Activated CD8-positive, alpha-beta T cell treated with anti-CD3 and anti-CD28 coated beads for 36 hours (primary cell): ENCODE measurements at regions of chr4 and their contacts with region 1.

Region 1: DNA sequence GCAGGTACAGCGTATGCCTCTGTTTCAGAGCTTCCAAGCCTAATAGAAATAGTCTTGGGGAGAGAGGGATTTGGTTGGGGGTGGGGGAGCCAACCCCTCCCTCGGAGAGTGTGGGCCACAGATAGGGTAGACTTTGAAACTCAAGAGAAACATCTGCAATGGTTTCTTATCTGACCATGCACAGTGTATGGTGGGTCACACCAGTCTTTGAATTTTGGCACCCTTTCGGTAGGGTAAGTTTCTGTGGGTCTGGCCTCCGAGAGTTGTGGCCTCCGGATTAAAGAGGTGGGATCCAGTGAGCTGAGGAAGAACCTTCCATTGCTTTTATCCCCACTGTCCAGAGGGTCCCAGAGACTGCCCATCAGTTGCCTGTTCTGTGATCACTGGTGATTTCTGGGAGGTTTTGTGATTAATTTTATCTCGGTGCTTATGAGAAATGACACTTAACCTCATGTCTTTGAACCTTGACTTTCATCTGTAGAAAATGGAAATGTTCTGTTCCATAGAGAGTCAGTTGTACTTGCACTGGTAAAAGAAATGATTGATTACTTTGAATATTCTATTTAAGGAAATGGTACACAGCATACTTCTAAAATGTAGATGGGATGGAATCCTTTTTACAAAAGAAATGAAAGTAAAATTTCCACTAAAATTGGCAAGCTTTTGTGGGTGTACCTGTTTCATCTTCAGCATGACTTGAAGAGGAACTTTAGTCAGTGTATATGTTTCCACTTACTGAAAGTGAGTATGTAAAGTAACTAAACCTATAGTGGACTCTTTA is 62.7 kb downstream of the TMEM131L start:
- DNase-seq: no peak
- ATAC-seq: peak; percentile 73
- H3K4me3 Mint-ChIP-seq: peak overlapping the region; percentile 50
- H3K27ac Mint-ChIP-seq: peak overlapping the region; percentile 96
- H3K4me1 Mint-ChIP-seq: peaks cover 87% of the 10 kb centered on the region
- H3K27me3 Mint-ChIP-seq: no peaks in the 10 kb centered on the region
- CTCF ChIP-seq: no peak

Region 2: DNA sequence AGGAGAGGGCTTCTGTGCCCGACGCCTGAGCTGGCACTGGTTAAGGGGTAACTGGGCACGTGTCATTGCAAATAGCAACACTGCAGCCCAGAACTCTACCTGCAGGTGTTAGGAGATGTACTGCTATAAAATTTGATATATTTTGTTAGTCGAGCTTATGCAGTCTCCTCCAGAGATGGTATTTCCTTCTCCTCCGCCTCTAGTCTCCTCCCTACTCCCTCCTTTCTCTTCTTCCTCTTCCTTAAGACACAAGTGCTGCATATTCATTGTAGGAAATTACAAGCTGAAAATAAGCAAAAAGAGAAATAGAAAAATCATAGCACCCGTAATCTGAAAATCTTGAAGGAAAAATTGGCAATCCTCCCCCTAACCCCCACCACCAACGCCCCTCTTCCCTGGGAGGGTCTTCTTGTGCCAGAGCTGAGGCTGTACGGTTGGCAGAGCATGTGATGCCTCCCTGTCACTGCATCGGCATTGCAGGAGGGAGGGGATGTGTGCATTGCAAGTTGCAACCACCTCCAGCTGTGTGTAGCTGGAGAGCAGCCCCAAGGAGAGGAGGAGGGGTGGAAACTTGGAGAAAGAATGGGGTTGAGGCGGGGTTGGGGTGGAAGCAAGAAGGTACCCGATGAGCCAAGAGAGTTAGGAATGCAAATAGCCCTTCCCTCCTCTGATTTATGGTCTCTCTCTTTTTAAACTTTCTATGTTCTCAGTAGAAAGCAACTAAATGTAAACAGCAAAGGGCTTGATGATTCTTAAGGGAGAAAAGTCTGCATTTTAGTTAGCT is 232.7 kb before region 1 on chr4:
- CTCF ChIA-PET with region 1: no interaction called
- POLR2A ChIA-PET with region 1: no interaction called
- intact Hi-C with region 1: no loop called
- DNase-seq: no peak
- ATAC-seq: no peak
- H3K4me3 Mint-ChIP-seq: no peak overlapping the region
- H3K27ac Mint-ChIP-seq: no peak overlapping the region
- H3K4me1 Mint-ChIP-seq: no peaks in the 10 kb centered on the region
- H3K27me3 Mint-ChIP-seq: no peaks in the 10 kb centered on the region
- CTCF ChIP-seq: no peak

Region 3: GRCh38 chr4:153541456-153542096 is 12.7 kb after region 1 on chr4:
- CTCF ChIA-PET with region 1: interaction called, 26 read pairs
- POLR2A ChIA-PET with region 1: interaction called, 6 read pairs
- intact Hi-C with region 1: no loop called
- DNase-seq: peak; percentile 39
- ATAC-seq: peak; percentile 75
- H3K4me3 Mint-ChIP-seq: no peak overlapping the region
- H3K27ac Mint-ChIP-seq: peak overlapping the region; percentile 71
- H3K4me1 Mint-ChIP-seq: peaks cover 71% of the 10 kb centered on the region
- H3K27me3 Mint-ChIP-seq: no peaks in the 10 kb centered on the region
- CTCF ChIP-seq: no peak

Region 4: GRCh38 chr4:153603258-153603657 is 74.4 kb after region 1 on chr4:
- CTCF ChIA-PET with region 1: no interaction called
- POLR2A ChIA-PET with region 1: no interaction called
- intact Hi-C with region 1: no loop called
- DNase-seq: peak; percentile 82
- ATAC-seq: peak; percentile 53
- H3K4me3 Mint-ChIP-seq: no peak overlapping the region
- H3K27ac Mint-ChIP-seq: peak overlapping the region; percentile 43
- H3K4me1 Mint-ChIP-seq: peaks cover 32% of the 10 kb centered on the region
- H3K27me3 Mint-ChIP-seq: no peaks in the 10 kb centered on the region
- CTCF ChIP-seq: no peak